ENCODE measurements at regions of chr2 and their contacts with region 1.

Region 1: GRCh38 chr2:97935719-97936161 is 60.0 kb downstream of the TMEM131 start:
- DNase-seq: no peak
- ATAC-seq: peak; percentile 23 to 38 (median 36)
- H3K4me3 ChIP-seq: peak overlapping the region; percentile 13
- H3K27ac ChIP-seq: peak overlapping the region; percentile 73
- H3K4me1 ChIP-seq: peaks cover 59% of the 10 kb centered on the region
- H3K27me3 ChIP-seq: no peaks in the 10 kb centered on the region
- CTCF ChIP-seq: no peak

Region 2: DNA sequence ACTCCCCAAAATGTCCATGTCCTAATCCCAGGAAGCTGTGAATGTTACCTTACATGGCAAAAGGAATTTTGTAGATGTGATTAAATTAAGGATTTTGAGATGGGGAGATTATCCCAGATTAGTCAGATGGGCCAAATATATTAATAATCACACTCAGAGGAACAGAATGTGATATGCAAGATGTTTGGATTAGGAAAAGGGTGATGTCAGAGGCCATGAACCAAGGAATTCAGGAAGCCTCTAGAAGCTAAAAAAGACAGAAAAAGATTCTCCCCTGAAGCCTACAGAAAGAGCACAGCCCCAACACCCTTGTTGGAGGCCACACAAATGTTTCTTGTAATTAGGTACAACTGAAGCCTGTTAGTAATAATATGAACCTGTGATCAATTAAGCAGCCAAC is 46.9 kb after region 1 on chr2:
- intact Hi-C with region 1: loop called in 1 of 2 experiments (anchors 5 kb)
- DNase-seq: no peak
- ATAC-seq: peak in 1 of 4 donors; percentile 39
- H3K4me3 ChIP-seq: no peak overlapping the region
- H3K27ac ChIP-seq: peak overlapping the region; percentile 31
- H3K4me1 ChIP-seq: peaks cover 46% of the 10 kb centered on the region
- H3K27me3 ChIP-seq: no peaks in the 10 kb centered on the region
- CTCF ChIP-seq: no peak